PC-9 (cell line): ENCODE measurements at regions of chr1 and their contacts with region 1.

Region 1: DNA sequence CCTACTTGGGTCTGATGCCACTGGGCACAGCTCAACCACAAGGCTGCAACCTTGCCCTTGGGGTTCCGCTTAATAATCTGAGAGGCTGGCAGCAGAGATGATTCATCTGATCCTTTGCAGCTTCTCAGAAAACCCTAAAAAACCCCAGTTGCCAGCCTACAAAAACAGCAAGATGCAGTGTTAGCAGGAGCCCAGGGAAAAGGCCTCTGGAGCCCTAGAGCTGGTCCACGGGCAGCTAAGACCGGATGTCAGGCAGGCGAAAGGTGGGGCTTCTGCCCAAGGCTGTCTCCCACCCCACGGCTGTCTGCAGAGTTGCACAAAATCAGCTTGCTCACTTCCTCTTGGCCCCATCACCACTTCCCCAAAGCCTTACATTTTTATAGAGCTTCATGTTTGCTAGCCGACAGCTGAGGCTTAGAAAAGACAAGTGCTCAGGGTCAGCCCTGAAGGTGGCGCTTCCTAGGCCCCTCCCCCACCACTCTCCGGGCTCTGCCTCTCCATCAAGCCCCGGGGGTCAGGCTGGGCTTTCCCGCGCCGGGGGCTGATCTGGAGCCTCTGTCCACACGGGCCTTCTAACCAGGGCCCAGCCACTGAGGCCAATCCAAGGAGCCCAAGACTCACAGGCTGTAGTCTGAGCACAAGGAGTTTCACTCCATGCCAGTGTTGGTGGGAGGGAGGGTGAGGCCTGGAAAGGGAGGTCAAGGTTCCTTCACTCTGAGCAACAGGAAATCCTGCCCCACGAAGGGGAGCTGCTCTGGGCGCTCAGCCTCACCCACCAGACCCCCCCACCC is 4.2 kb upstream of the ADORA3 start:
- DNase-seq: peak; percentile 56 to 81
- H3K4me3 ChIP-seq: peak overlapping the region; percentile 53
- H3K27ac ChIP-seq: peak overlapping the region; percentile 74
- H3K4me1 ChIP-seq: peaks cover 26% of the 10 kb centered on the region
- H3K27me3 ChIP-seq: no peaks in the 10 kb centered on the region
- CTCF ChIP-seq: no peak

Region 2: GRCh38 chr1:110524311-110525251 is 983.0 kb before region 1 on chr1:
- CTCF ChIA-PET with region 1: interaction called, 10 read pairs
- POLR2A ChIA-PET with region 1: no interaction called
- intact Hi-C with region 1: no loop called
- DNase-seq: peak in 1 of 2 experiments; percentile 27
- H3K4me3 ChIP-seq: no peak overlapping the region
- H3K27ac ChIP-seq: no peak overlapping the region
- H3K4me1 ChIP-seq: 0 out of 2 replicates have a peak, but pooled peaks cover 8% of the 10 kb centered on the region
- H3K27me3 ChIP-seq: peaks cover 96% of the 10 kb centered on the region
- CTCF ChIP-seq: peak; percentile 91

Region 3: GRCh38 chr1:111541721-111542120 is 34.1 kb after region 1 on chr1:
- CTCF ChIA-PET with region 1: interaction called, 3 read pairs
- POLR2A ChIA-PET with region 1: interaction called, 5 read pairs
- intact Hi-C with region 1: loop called (anchors 5 kb)
- DNase-seq: peak; percentile 9 to 88
- H3K4me3 ChIP-seq: 0 out of 2 replicates have a peak overlapping the region, but pooled peaks have one; percentile 8
- H3K27ac ChIP-seq: peak overlapping the region; percentile 19; the same call in 1 of the 2 replicates
- H3K4me1 ChIP-seq: peaks cover 29% of the 10 kb centered on the region
- H3K27me3 ChIP-seq: no peaks in the 10 kb centered on the region
- CTCF ChIP-seq: no peak

Region 4: DNA sequence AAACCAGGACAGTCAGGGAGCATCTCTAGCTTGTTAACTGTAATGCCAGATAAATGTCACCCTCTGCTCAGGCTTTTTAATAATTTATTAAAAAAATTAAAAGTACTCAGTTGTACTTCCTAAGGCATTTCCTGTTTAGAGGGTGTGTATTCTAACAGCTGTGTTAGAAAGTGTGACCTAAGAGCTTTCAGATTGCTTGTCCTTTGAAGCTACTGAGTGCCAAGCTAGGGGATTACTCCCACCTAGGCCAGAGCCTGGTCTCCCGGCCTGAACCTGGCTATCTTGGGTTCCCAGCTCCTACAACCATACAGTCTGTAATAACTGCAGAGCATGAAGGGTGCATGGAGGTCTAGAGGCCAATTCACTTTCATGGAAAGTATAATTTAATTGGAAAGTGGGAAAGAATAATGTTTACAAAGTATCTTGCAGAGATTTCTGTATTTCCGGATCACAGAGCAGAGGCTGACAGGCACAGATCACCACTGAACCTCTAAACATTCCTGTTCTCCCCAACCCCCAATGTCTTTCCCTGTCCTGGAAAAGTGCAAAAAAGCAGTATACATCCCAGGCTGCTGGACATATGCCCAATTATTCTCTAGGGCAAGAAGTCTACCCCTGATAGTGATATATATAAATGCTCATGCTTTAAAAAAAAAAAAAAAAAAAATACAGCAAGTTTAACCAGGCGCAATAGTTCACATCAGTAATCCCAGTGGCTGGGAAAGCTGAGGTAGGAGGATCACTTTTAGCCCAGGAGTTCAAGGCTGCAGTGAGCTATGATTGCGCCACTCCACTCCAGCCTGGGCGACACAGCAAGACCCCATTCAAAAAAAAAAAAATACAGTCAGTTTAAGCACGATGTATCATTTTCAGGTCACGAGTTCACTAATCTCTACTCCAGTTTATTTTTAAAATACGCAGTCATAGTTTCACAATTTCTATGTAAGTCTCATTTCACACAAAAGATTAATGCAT is 75.3 kb after region 1 on chr1:
- CTCF ChIA-PET with region 1: no interaction called
- POLR2A ChIA-PET with region 1: no interaction called
- intact Hi-C with region 1: no loop called
- DNase-seq: no peak
- H3K4me3 ChIP-seq: no peak overlapping the region
- H3K27ac ChIP-seq: no peak overlapping the region
- H3K4me1 ChIP-seq: no peaks in the 10 kb centered on the region
- H3K27me3 ChIP-seq: no peaks in the 10 kb centered on the region
- CTCF ChIP-seq: no peak

Region 5: GRCh38 chr1:111619635-111620440 is 112.2 kb after region 1 on chr1 and contains the start of gene RAP1A:
- CTCF ChIA-PET with region 1: interaction called, 39 read pairs
- POLR2A ChIA-PET with region 1: interaction called, 3 read pairs
- intact Hi-C with region 1: no loop called
- DNase-seq: peak; percentile 81 to 92
- H3K4me3 ChIP-seq: peak within 1 kb of the TSS; percentile 69
- H3K27ac ChIP-seq: peak within 1 kb of the TSS; percentile 19; the same call in 1 of the 2 replicates
- H3K4me1 ChIP-seq: peaks cover 31% of the 10 kb centered on the region
- H3K27me3 ChIP-seq: no peaks in the 10 kb centered on the region
- CTCF ChIP-seq: no peak
- total RNA-seq, gene RAP1A: 45.4 and 55.2 TPM in 2 replicates

Region 6: GRCh38 chr1:111656086-111657017 is 148.7 kb after region 1 on chr1:
- CTCF ChIA-PET with region 1: interaction called, 4 read pairs
- POLR2A ChIA-PET with region 1: no interaction called
- intact Hi-C with region 1: loop called (anchors 1 kb)
- DNase-seq: peak; percentile 20 to 59
- H3K4me3 ChIP-seq: no peak overlapping the region
- H3K27ac ChIP-seq: no peak overlapping the region
- H3K4me1 ChIP-seq: peaks cover 25% of the 10 kb centered on the region
- H3K27me3 ChIP-seq: no peaks in the 10 kb centered on the region
- CTCF ChIP-seq: peak; percentile 92

Region 7: GRCh38 chr1:111755331-111756123 is 247.9 kb after region 1 on chr1 and contains the start of gene DDX20:
- CTCF ChIA-PET with region 1: interaction called, 4 read pairs
- POLR2A ChIA-PET with region 1: no interaction called
- intact Hi-C with region 1: loop called (anchors 2 kb)
- DNase-seq: peak; percentile 89 to 96
- H3K4me3 ChIP-seq: peak within 1 kb of the TSS; percentile 92
- H3K27ac ChIP-seq: peak within 1 kb of the TSS; percentile 64
- H3K4me1 ChIP-seq: peaks cover 20% of the 10 kb centered on the region
- H3K27me3 ChIP-seq: no peaks in the 10 kb centered on the region
- CTCF ChIP-seq: peak; percentile 90
- total RNA-seq, gene DDX20: 8.4 and 8.9 TPM in 2 replicates